HAP-1 (cell line): ENCODE measurements at regions of chr4 and their contacts with region 1.

Region 1: GRCh38 chr4:140049024-140049848 is 104.7 kb downstream of the MAML3 start:
- DNase-seq: peak in 1 of 2 experiments; percentile 29
- H3K4me3 ChIP-seq: no peak overlapping the region
- H3K4me1 ChIP-seq: no peaks in the 10 kb centered on the region; the same call in 1 of the 2 replicates
- H3K27me3 ChIP-seq: no peaks in the 10 kb centered on the region

Region 2: DNA sequence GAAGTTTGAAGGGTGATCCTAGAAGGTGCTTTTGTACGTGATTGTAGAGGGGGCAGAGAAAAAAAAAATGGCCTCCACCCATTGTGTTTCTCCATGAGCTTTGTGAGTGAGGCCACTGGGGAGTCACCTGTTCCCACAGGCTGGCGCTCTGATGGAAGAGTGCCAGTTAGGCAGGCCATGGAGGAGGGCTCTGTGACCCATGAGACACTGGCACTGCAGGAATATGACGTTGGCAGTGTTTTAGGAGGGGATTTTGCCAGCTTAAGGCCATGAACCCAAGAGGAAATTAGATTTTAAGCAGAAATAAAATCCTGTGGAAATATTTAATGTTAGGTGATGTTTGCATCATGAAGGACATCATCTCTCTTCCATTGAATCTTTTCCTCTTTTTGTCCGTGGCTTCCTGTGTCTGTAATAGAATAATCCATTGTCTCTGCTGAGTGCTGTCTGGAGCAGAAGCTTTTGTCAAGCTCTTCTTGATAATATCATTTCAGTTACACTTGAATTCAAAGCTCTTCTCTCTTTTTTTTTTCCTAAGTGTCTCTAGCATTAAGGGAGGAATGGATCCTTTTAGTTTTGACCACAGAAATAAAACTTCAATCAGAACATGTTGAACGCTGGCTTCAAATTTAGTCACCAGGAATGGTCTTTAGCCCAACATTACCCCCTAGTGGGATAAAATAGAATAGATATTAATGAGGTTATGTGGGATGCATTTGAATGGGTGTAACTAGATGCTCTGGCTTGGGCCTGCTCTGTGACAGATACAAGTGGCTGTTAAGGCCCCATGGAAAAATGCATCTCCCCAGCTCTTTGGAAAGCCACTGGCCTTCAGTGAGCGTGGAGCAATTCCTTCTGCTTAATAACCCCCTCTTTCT is 560.6 kb after region 1 on chr4:
- in situ Hi-C with region 1: loop called (anchors 25 kb)
- DNase-seq: peak; percentile 53 to 79
- H3K4me3 ChIP-seq: no peak overlapping the region
- H3K4me1 ChIP-seq: peaks cover 3% of the 10 kb centered on the region; the same call in 1 of the 2 replicates
- H3K27me3 ChIP-seq: no peaks in the 10 kb centered on the region